Activated T-helper 1 cell treated with anti-CD3 and anti-CD28 coated beads, Interleukin-12 subunit alpha, Interleukin-12 subunit beta, Interleukin-2, Interleukin-4 antibody, amounts not matched to agents 30 ng/mL and 10 ng/mL and 1 ng/mL, durations not matched to agents 14 hours and 24 hours and 36 hours (primary cell): ENCODE measurements at regions of chr5 and their contacts with region 1.

Region 1: DNA sequence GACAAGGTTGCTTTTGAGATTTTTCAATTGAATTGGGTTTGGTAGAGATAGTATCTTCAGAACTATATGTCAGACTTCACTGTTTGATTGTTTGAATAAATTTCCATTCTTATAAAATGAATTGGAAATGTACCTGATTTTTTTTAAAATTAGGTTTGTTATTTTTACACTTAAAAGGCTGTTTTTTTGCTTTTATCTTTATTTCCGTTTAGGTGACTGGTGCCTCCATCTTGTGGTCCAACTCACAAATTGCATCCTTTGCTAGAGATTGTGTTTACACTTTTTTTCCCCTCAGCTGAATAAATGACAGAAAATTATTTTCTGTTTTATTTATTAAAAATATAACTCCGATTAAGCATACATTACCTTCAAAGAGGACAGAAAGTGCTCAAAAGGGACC is 15.6 kb downstream of the NDUFAF2 start:
- DNase-seq: no peak
- H3K4me3 Mint-ChIP-seq: no peak overlapping the region
- H3K27ac Mint-ChIP-seq: no peak overlapping the region
- H3K4me1 Mint-ChIP-seq: no peaks in the 10 kb centered on the region
- H3K27me3 Mint-ChIP-seq: no peaks in the 10 kb centered on the region

Region 2: GRCh38 chr5:61658592-61659008 is 698.0 kb after region 1 on chr5:
- intact Hi-C with region 1: loop called (anchors 2 kb)
- DNase-seq: peak; percentile 51
- H3K4me3 Mint-ChIP-seq: no peak overlapping the region
- H3K27ac Mint-ChIP-seq: no peak overlapping the region
- H3K4me1 Mint-ChIP-seq: no peaks in the 10 kb centered on the region
- H3K27me3 Mint-ChIP-seq: peaks cover 7% of the 10 kb centered on the region